ENCODE measurements at regions of chr1 and their contacts with region 1.

Region 1: GRCh38 chr1:48061162-48062136 is 64.3 kb upstream of the TRABD2B start:
- DNase-seq: peak; percentile 56
- ATAC-seq: peak; percentile 68 to 82

Region 2: GRCh38 chr1:47738560-47739182 is 322.8 kb before region 1 on chr1:
- intact Hi-C with region 1: loop called (anchors 5 to 10 kb)
- DNase-seq: peak; percentile 53
- ATAC-seq: peak; percentile 87 to 90

Region 3: GRCh38 chr1:47745725-47746597 is 315.5 kb before region 1 on chr1:
- intact Hi-C with region 1: loop called in 1 of 2 experiments (anchors 10 kb)
- DNase-seq: peak; percentile 45
- ATAC-seq: peak; percentile 38 to 69

Region 4: DNA sequence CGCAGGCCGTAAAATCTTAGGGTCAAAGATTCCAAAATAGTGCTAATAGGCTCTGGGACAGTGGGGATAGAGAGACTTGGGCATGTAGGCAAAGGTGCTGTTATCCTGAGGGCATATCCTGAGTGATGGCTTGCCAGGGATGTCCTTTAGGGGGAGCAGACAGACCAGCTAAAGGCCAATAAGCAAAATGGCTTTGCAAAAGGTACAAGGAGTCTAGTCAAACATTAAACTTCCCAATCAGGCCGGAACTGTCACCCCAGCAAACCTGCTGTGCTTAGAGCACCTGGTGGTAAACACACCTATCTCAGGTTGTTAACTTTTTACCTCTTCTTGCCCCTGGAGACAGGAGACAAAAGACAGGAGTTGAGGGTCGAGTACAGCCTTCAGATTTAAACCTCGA is 113.3 kb before region 1 on chr1:
- intact Hi-C with region 1: no loop called
- DNase-seq: no peak
- ATAC-seq: no peak

Region 5: DNA sequence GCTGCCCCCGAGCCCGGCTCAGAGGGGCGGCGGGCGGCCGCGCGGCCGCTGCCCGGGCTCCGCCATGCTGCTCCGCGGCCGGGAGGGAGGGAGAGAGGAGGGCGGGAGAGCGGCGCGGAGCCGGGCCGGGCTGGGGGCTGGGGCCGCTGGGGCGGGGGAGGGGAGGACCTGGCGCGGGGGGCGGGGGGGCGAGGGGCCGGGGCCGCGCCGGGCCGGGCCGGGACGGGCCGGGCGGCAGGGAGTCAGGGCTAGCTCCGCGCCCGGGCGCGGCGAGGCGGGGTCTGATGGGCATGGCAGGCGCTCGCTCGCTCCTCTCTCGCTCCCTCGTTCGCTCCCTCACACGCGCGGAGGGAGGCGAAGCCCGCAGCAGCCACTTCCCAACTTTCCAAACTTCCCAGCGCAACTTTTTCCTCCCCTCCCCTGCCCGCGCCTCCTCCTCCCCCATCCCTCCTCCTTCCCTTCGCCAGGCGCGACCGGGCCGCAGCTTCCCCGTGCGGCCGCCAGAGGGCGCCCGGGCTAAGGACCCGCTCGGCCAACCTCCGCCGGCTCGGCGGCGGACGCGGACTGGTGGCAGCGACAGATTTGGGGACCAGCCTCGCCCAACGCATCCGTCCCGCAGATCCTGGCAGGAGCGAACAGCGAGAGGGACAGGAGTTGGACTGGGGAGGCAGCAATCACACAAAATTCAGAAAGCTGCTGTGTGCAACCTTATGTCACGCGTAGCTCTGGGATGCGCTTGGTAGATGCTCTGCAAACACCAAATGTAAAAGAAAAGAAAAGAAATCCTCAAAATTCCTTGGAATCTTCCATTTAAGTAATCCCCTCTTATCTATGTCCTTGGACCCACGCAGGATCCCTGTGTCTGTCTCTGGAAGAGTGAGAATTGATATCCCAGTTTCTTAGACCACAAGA is 63.9 kb before region 1 on chr1 and contains the start of gene TRABD2B:
- intact Hi-C with region 1: loop called (anchors 2 to 5 kb)
- DNase-seq: peak; percentile 85
- ATAC-seq: peak; percentile 74 to 81
- total RNA-seq, gene TRABD2B: 6.2 to 7.6 TPM

Region 6: DNA sequence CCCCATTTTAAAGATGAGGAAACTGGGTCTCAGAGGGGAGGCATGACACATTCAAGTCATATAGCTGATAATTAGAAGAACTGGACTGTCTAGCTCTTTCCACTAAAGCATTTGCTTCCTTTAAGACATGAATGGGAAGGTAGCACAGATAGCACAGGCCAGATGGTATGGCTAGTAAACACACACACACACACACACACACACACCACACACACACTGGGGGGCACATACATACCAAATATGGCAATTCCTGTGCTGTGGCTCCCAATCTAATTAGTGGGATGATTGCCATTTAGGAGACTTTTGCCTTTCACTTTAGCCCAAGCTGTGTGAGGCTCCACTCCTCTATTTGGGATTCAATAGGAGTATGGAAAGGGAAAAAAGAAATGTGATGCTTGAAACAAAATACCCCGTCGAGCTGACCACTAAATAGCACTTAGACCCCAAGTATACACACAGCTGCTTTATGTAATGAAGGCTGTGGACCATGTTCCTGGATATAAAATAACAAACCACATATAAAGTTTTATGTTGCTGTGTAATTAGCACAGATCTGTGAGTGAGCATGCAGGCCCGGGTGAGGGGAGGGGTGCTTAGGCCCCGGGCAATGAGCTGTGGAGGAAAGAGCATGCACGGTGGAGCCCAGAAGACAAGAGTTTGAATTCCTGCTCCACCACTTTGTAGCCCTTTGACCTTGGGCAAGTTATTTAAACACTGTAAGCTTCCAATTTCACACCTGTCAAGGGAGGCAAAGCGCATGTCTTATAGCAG is 57.5 kb before region 1 on chr1:
- intact Hi-C with region 1: loop called (anchors 2 to 5 kb)
- DNase-seq: no peak
- ATAC-seq: no peak

Region 7: DNA sequence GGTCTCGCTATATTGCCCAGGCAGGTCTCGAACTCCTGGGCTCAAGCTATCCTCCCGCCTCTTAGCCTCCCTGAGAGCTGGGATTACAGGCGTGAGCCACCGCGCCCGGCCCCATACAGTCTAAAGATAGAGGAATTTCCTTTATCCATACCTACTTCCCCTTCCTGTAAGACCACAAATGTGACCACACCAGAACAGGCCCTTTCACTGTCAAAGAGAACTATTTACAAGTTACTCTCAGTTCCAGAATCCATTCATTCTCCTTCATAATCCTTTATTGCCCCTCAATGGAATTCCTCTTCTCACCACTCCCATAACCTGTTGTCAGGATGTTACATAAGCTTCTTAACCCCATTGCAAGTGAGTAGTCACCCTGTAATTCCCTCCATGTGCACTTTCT is 134.8 kb after region 1 on chr1:
- intact Hi-C with region 1: no loop called
- DNase-seq: no peak
- ATAC-seq: no peak

Measured in left cardiac atrium (tissue), 4 donors.